MCF 10A (cell line): ENCODE measurements at regions of chr1 and their contacts with region 1.

Region 1: GRCh38 chr1:97938285-97938642 is 17.4 kb upstream of the DPYD start:
- DNase-seq: no peak
- H3K4me3 Mint-ChIP-seq: peak overlapping the region; percentile 51
- H3K27ac Mint-ChIP-seq: peak overlapping the region; percentile 76
- H3K4me1 Mint-ChIP-seq: peaks cover 13% of the 10 kb centered on the region
- H3K27me3 Mint-ChIP-seq: no peaks in the 10 kb centered on the region
- CTCF ChIP-seq: no peak

Region 2: GRCh38 chr1:97654876-97655585 is 283.2 kb before region 1 on chr1:
- CTCF ChIA-PET with region 1: no interaction called
- POLR2A ChIA-PET with region 1: no interaction called
- intact Hi-C with region 1: loop called (anchors 10 kb)
- DNase-seq: no peak
- H3K4me3 Mint-ChIP-seq: no peak overlapping the region
- H3K27ac Mint-ChIP-seq: no peak overlapping the region
- H3K4me1 Mint-ChIP-seq: peaks cover 5% of the 10 kb centered on the region
- H3K27me3 Mint-ChIP-seq: no peaks in the 10 kb centered on the region
- CTCF ChIP-seq: no peak

Region 3: GRCh38 chr1:97680894-97681293 is 257.4 kb before region 1 on chr1:
- CTCF ChIA-PET with region 1: no interaction called
- POLR2A ChIA-PET with region 1: no interaction called
- intact Hi-C with region 1: no loop called
- DNase-seq: no peak
- H3K4me3 Mint-ChIP-seq: no peak overlapping the region
- H3K27ac Mint-ChIP-seq: no peak overlapping the region
- H3K4me1 Mint-ChIP-seq: no peaks in the 10 kb centered on the region
- H3K27me3 Mint-ChIP-seq: no peaks in the 10 kb centered on the region
- CTCF ChIP-seq: no peak